Right ventricle myocardium inferior (tissue), 1 donor: ENCODE measurements at regions of chr14 and their contacts with region 1.

Region 1: DNA sequence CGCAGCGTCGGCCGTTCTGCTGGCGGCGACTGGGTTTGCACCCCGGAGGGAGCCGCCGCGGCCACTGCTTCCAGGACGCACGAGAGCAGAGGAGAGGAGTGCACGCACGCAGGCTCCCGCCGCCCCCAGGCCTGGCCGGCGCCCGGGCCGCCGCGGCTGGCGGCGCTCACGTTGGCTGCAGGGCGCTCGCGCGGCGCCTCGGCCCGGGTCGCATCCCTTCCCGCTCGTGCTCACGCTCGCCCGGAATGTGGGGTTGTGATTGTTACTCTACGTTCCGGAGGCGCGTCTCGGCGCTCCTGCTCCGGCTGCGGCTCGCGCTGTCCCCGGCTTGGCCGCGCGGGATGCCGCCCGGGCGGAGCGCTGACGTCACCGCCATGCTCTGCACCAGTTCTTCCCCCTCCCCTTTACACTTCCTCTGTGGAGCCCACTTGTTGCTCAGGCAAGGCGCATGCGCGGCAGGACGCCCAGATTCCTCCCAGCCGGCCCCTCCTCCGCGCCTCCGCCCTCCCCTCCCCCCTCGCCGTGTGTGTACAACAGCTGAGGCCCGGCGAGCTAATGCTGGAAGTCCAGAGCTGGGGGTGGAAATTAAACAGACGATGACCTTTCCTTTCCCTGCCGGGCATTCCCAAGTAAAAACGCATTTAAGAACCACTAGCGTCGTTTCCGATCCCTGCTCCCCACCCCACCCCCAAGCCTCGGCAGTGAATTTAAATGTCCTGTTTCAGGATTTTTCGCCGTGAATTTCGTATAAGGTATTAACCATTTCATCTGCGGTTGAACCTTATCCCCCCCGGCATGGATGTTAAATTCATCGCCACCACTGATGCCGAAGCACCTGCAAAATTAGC is at the start of gene IRF2BPL:
- DNase-seq: peak; percentile 99
- ATAC-seq: peak; percentile 74
- total RNA-seq, gene IRF2BPL: 41.1 TPM

Region 2: DNA sequence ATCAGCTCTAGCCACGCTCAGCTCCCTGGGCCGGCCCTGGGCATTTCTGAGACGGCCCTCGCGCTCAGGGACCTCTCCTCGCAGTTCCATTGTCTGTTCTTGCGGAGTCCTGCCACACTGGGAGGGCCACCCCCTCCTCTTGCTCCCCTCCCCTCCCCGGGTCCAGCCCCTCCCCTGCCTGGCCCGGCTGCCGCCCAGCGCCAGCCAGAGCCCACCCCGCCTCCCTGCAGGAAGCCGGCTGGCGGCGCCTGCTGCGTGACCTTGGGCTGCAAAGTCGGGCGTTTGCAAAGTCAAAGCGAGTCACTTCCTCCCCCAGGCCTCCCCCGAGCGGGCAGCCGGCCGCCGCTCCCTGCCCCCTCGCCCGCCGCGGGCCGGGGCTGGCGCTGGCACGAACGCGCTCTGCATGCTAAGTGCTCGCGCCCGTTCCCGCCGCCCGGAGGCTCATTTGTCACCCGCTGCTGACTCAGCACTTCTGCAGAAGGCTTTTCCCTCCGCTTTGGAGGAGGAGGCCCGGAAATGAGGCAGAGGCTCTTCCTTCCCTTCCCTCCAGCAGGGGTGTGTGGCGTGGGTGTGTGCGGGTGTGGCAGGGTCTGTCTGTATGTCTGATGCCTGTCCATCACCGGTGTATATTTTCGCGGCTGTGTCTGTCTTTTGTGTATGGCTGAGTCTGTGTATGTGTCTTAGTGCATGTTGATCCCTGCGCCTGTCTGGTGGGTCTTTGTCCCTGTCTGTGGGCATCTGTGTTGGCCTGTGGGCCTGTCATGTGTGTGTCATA is 72.1 kb before region 1 on chr14:
- intact Hi-C with region 1: loop called (anchors 2 kb)
- DNase-seq: peak; percentile 95
- ATAC-seq: peak; percentile 85

Region 3: GRCh38 chr14:77040059-77040740 is 11.6 kb after region 1 on chr14:
- intact Hi-C with region 1: loop called (anchors 1 kb)
- DNase-seq: peak; percentile 100
- ATAC-seq: peak; percentile 85

Region 4: DNA sequence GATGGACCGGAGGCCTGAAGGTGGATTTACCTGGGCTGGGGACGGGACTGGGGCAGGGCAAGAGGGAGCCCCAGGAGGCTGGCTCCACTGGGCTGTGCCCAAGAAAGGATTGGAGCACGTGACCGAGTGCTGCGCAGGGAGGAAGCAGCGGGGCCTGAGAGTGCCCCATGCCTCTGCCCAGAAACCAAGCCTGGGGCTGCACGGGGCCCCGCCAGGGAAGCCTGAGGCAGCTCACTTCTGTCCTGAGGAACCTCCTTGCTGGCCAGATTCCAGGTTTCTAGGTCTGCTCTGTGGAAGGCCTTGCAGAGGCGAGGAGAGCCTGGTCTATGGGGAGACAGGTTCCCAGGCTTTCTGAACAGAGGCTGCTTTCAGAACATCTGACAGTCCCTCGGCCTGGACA is 232.0 kb after region 1 on chr14:
- intact Hi-C with region 1: no loop called
- DNase-seq: no peak
- ATAC-seq: no peak

Region 5: DNA sequence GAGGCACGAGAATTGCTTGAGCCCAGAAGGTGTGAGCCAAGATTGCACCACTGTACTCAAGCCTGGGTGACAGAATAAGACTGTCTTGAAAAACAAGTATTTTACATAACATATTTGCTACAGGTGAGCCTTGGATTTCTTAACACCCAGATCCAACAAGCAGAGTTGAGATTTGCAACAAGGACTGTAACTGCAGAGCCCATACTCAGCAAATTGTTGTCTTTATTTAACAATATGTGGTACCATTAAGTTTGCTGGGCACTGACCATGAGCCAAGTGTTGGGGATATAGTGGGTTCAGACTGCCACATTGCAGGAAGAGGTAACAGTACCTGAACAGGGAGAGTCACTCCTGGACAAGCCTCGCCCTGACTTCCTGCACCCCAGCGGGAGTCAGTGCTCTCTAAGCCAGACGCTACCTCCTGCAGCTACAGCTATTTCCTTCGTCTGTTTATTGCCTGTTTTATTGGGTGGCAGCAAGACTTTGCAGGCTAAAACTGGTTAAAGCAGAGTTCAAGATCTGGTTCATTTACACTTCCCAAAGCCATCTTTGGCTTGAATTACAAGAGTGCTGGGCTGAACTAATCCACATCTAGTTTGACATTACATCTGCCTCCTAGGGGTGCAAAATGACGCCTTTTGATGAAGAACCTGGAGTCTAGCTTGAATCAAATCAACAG is 441.7 kb after region 1 on chr14:
- intact Hi-C with region 1: no loop called
- DNase-seq: no peak
- ATAC-seq: no peak